AG04449 (cell line): ENCODE measurements at regions of chr12 and their contacts with region 1.

Region 1: GRCh38 chr12:20601668-20602280 is 93.4 kb upstream of the SLCO1C1 start:
- DNase-seq: peak; percentile 36
- H3K4me3 ChIP-seq: no peak overlapping the region
- CTCF ChIP-seq: peak; percentile 28

Region 2: GRCh38 chr12:20376984-20377383 is 224.8 kb before region 1 on chr12:
- CTCF ChIA-PET with region 1: interaction called, 12 read pairs
- POLR2A ChIA-PET with region 1: no interaction called
- DNase-seq: no peak
- H3K4me3 ChIP-seq: no peak overlapping the region
- CTCF ChIP-seq: peak; percentile 15

Region 3: DNA sequence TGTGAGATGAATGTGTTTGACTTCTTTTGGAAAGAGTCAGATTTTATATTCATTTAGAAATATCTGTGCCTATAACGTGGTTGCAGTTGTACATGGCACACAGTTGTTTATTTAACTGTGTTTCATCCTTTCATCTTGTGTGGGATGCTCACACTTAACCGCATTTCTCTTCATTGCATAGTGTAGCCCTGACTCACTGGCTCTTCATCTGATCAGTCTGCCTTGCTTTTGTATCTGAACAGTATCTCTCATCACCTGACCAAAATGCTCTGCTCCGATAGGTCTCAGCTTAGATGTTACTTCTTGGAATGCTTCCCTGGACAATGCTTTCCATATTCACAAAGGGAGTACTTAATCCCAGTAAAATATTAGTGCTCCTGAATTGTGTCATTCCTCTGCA is 150.0 kb before region 1 on chr12:
- CTCF ChIA-PET with region 1: no interaction called
- POLR2A ChIA-PET with region 1: no interaction called
- DNase-seq: peak; percentile 71
- H3K4me3 ChIP-seq: no peak overlapping the region
- CTCF ChIP-seq: no peak

Region 4: DNA sequence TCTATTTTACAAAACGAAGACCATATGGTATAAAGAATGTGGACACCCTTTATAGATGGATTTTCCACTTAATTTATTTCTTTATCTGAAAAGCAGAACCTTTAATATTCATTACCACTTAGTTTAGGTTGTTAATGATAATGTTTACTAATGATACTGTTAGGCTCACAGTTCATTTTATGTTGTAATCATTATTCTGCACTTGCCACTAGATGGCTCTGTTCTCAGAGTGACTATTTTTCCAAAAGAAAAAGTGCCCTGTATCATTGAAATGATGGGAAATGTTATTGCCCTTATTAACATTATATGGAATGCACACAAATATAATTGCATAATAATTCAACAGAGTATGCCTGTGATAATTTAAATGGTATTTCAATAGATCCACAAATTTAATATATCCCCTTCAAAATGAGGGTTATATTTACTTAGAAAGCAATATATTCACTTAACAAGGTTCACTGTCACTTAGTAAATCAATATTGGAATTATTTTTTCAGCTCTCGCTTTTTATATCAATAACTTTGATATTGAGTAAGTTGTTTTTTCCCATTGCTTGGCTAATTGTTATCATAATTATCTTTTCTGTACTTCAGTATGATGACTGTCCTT is 137.8 kb before region 1 on chr12:
- CTCF ChIA-PET with region 1: interaction called, 47 read pairs
- POLR2A ChIA-PET with region 1: no interaction called
- DNase-seq: no peak
- H3K4me3 ChIP-seq: no peak overlapping the region
- CTCF ChIP-seq: peak; percentile 41

Region 5: GRCh38 chr12:20588042-20588441 is 13.7 kb before region 1 on chr12:
- CTCF ChIA-PET with region 1: interaction called, 17 read pairs
- POLR2A ChIA-PET with region 1: no interaction called
- DNase-seq: no peak
- H3K4me3 ChIP-seq: no peak overlapping the region
- CTCF ChIP-seq: no peak

Region 6: DNA sequence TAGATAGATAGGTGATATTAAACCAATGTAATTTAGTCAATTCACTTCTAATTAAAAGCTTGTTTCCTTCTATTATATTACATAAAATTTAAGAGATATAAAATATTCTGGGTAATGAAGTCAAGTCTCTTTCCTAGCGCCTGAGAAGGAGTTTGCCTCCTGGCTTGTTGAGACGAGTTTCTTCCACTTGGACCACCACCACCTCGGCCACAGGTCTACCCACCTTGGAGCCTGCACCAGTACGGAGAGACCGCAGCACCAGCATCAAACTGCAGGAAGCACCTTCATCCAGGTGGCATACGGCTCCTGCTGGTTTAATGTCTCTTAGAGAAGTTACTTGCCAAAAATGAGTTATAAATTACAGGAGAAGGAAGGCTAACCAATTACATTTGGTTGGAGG is 14.3 kb after region 1 on chr12:
- CTCF ChIA-PET with region 1: interaction called, 15 read pairs
- POLR2A ChIA-PET with region 1: no interaction called
- DNase-seq: no peak
- H3K4me3 ChIP-seq: no peak overlapping the region
- CTCF ChIP-seq: no peak

Region 7: GRCh38 chr12:20624718-20625117 is 22.9 kb after region 1 on chr12:
- CTCF ChIA-PET with region 1: interaction called, 22 read pairs
- POLR2A ChIA-PET with region 1: no interaction called
- DNase-seq: no peak
- H3K4me3 ChIP-seq: no peak overlapping the region
- CTCF ChIP-seq: peak; percentile 33

Region 8: GRCh38 chr12:20646239-20646827 is 44.6 kb after region 1 on chr12:
- CTCF ChIA-PET with region 1: no interaction called
- POLR2A ChIA-PET with region 1: no interaction called
- DNase-seq: no peak
- H3K4me3 ChIP-seq: no peak overlapping the region
- CTCF ChIP-seq: peak; percentile 50